MCF 10A (cell line): ENCODE measurements at regions of chr1 and their contacts with region 1.

Region 1: GRCh38 chr1:215911406-215911968 is 344.4 kb downstream of the KCTD3 start:
- DNase-seq: peak; percentile 42
- H3K4me3 Mint-ChIP-seq: no peak overlapping the region
- H3K27ac Mint-ChIP-seq: no peak overlapping the region
- H3K4me1 Mint-ChIP-seq: no peaks in the 10 kb centered on the region
- H3K27me3 Mint-ChIP-seq: peaks cover 57% of the 10 kb centered on the region
- CTCF ChIP-seq: peak; percentile 28

Region 2: GRCh38 chr1:215863796-215864195 is 47.7 kb before region 1 on chr1:
- CTCF ChIA-PET with region 1: no interaction called
- POLR2A ChIA-PET with region 1: no interaction called
- intact Hi-C with region 1: no loop called
- DNase-seq: no peak
- H3K4me3 Mint-ChIP-seq: no peak overlapping the region
- H3K27ac Mint-ChIP-seq: no peak overlapping the region
- H3K4me1 Mint-ChIP-seq: no peaks in the 10 kb centered on the region
- H3K27me3 Mint-ChIP-seq: peaks cover 60% of the 10 kb centered on the region
- CTCF ChIP-seq: no peak

Region 3: GRCh38 chr1:215923128-215923824 is 11.8 kb after region 1 on chr1:
- CTCF ChIA-PET with region 1: interaction called, 3 read pairs
- POLR2A ChIA-PET with region 1: no interaction called
- intact Hi-C with region 1: loop called (anchors 2 kb)
- DNase-seq: no peak
- H3K4me3 Mint-ChIP-seq: no peak overlapping the region
- H3K27ac Mint-ChIP-seq: no peak overlapping the region
- H3K4me1 Mint-ChIP-seq: no peaks in the 10 kb centered on the region
- H3K27me3 Mint-ChIP-seq: peaks cover 100% of the 10 kb centered on the region
- CTCF ChIP-seq: no peak